ENCODE measurements at regions of chr4 and their contacts with region 1.

Region 1: GRCh38 chr4:121243485-121243884 is 79.4 kb upstream of the TNIP3 start:
- DNase-seq: no peak
- H3K4me3 Mint-ChIP-seq: peak overlapping the region; percentile 58
- H3K27ac Mint-ChIP-seq: no peak overlapping the region
- H3K4me1 Mint-ChIP-seq: peaks cover 9% of the 10 kb centered on the region
- H3K27me3 Mint-ChIP-seq: no peaks in the 10 kb centered on the region

Region 2: GRCh38 chr4:121199742-121200561 is 43.5 kb before region 1 on chr4:
- CTCF ChIA-PET with region 1: interaction called, 11 read pairs
- POLR2A ChIA-PET with region 1: no interaction called
- DNase-seq: no peak
- H3K4me3 Mint-ChIP-seq: no peak overlapping the region
- H3K27ac Mint-ChIP-seq: no peak overlapping the region
- H3K4me1 Mint-ChIP-seq: peaks cover 21% of the 10 kb centered on the region
- H3K27me3 Mint-ChIP-seq: peaks cover 3% of the 10 kb centered on the region

Region 3: GRCh38 chr4:121353213-121353612 is 109.7 kb after region 1 on chr4:
- CTCF ChIA-PET with region 1: no interaction called
- POLR2A ChIA-PET with region 1: no interaction called
- DNase-seq: no peak
- H3K4me3 Mint-ChIP-seq: no peak overlapping the region
- H3K27ac Mint-ChIP-seq: no peak overlapping the region
- H3K4me1 Mint-ChIP-seq: no peaks in the 10 kb centered on the region
- H3K27me3 Mint-ChIP-seq: peaks cover 40% of the 10 kb centered on the region

Measured in activated CD4-positive, alpha-beta T cell treated with anti-CD3 and anti-CD28 coated beads, Interleukin-2, amount 10 ng/mL, durations not matched to agents 7 days and 5 days (primary cell).